Panc1 (cell line): ENCODE measurements at regions of chr14 and their contacts with region 1.

Region 1: GRCh38 chr14:92719890-92720323 is 28.5 kb downstream of the LGMN start:
- DNase-seq: no peak
- ATAC-seq: peak; percentile 21; the same call in 1 of the 2 replicates
- H3K4me3 ChIP-seq: no peak overlapping the region
- H3K27ac ChIP-seq: no peak overlapping the region
- H3K4me1 ChIP-seq: no peaks in the 10 kb centered on the region
- H3K27me3 ChIP-seq: no peaks in the 10 kb centered on the region
- CTCF ChIP-seq: no peak

Region 2: GRCh38 chr14:92783816-92784431 is 64.0 kb after region 1 on chr14:
- CTCF ChIA-PET with region 1: interaction called, 3 read pairs
- POLR2A ChIA-PET with region 1: no interaction called
- in situ Hi-C with region 1: no loop called
- intact Hi-C with region 1: loop called (anchors 2 kb)
- DNase-seq: peak; percentile 60
- ATAC-seq: peak; percentile 91
- H3K4me3 ChIP-seq: no peak overlapping the region
- H3K27ac ChIP-seq: no peak overlapping the region
- H3K4me1 ChIP-seq: no peaks in the 10 kb centered on the region
- H3K27me3 ChIP-seq: no peaks in the 10 kb centered on the region
- CTCF ChIP-seq: peak; percentile 65

Region 3: GRCh38 chr14:92897922-92898565 is 178.1 kb after region 1 on chr14:
- CTCF ChIA-PET with region 1: no interaction called
- POLR2A ChIA-PET with region 1: no interaction called
- in situ Hi-C with region 1: no loop called
- intact Hi-C with region 1: no loop called
- DNase-seq: no peak
- ATAC-seq: no peak
- H3K4me3 ChIP-seq: no peak overlapping the region
- H3K27ac ChIP-seq: no peak overlapping the region
- H3K4me1 ChIP-seq: no peaks in the 10 kb centered on the region
- H3K27me3 ChIP-seq: no peaks in the 10 kb centered on the region
- CTCF ChIP-seq: no peak